B cell (primary cell): ENCODE measurements at regions of chrX and their contacts with region 1.

Region 1: DNA sequence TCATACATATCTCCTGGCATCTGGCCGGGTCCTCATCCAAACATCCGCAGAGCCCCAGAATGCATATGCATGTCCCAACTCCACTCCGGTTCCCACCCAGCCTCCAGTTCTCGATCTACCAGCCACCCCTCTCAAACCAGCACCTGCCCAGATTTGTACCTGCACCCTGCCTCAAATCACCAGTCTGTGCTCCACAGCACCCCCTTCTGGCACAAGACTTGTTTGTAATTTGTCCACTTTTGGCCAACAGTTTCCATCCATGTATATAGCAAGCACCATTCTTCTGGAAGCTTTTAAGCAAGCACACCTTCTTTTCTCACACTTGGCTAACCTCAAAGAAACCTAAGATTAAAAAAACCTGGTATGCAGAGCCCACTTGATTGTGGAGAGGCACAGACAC is 644.1 kb downstream of the MID1IP1 start:
- DNase-seq: peak; percentile 30
- ATAC-seq: no peak
- H3K4me3 ChIP-seq: no peak overlapping the region
- H3K4me3 Mint-ChIP-seq: no peak overlapping the region
- H3K27ac ChIP-seq: no peak overlapping the region
- H3K27ac Mint-ChIP-seq: no peak overlapping the region
- H3K4me1 ChIP-seq: peaks cover 26 to 28% of the 10 kb centered on the region in 2 donors
- H3K4me1 Mint-ChIP-seq: peaks cover 28% of the 10 kb centered on the region
- H3K27me3 ChIP-seq: no peaks in the 10 kb centered on the region
- H3K27me3 Mint-ChIP-seq: no peaks in the 10 kb centered on the region
- CTCF ChIP-seq: no peak

Region 2: DNA sequence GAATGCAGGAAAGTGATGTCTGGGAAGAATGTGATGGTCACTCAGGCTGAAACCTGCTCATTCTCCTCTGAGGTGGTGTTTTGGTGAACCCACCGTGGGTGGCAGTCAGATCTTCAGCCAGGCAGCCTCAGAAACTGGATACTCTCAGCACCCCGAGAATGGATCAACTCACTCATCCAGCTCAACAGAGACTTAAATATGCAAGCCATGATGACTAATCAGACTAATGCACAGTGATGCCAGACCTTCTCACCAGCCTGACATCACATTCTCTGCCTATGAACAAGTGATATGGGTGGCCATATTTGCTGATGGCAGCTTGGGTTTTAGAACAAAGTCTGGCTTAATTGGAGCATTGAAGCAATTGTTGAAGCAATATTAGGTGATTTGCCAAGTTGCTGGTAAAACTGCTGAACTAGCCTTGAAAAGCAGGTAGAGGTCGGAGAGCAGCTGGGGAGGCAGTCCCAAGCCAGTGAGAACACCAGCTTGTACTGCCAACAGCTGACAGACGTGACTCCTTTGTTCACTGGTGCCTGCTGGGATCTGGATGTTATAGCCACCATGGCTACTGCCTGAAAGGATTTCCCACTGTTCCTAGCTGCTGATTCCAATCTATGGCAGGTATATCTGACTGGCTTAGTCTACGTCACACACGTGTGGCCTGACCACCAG is 36.0 kb before region 1 on chrX:
- CTCF ChIA-PET with region 1: no interaction called
- POLR2A ChIA-PET with region 1: no interaction called
- intact Hi-C with region 1: no loop called
- DNase-seq: no peak
- ATAC-seq: no peak
- H3K4me3 ChIP-seq: no peak overlapping the region
- H3K4me3 Mint-ChIP-seq: no peak overlapping the region
- H3K27ac ChIP-seq: no peak overlapping the region
- H3K27ac Mint-ChIP-seq: no peak overlapping the region
- H3K4me1 ChIP-seq: no peaks in the 10 kb centered on the region
- H3K4me1 Mint-ChIP-seq: no peaks in the 10 kb centered on the region
- H3K27me3 ChIP-seq: no peaks in the 10 kb centered on the region
- H3K27me3 Mint-ChIP-seq: peaks cover 14% of the 10 kb centered on the region
- CTCF ChIP-seq: no peak

Region 3: GRCh38 chrX:39497702-39498265 is 52.4 kb after region 1 on chrX:
- CTCF ChIA-PET with region 1: no interaction called
- POLR2A ChIA-PET with region 1: no interaction called
- intact Hi-C with region 1: no loop called
- DNase-seq: no peak
- ATAC-seq: no peak
- H3K4me3 ChIP-seq: no peak overlapping the region
- H3K4me3 Mint-ChIP-seq: no peak overlapping the region
- H3K27ac ChIP-seq: no peak overlapping the region
- H3K27ac Mint-ChIP-seq: no peak overlapping the region
- H3K4me1 ChIP-seq: peaks cover 22 to 24% of the 10 kb centered on the region in 2 donors
- H3K4me1 Mint-ChIP-seq: peaks cover 15% of the 10 kb centered on the region
- H3K27me3 ChIP-seq: no peaks in the 10 kb centered on the region
- H3K27me3 Mint-ChIP-seq: peaks cover 4% of the 10 kb centered on the region
- CTCF ChIP-seq: no peak

Region 4: GRCh38 chrX:39613482-39613921 is 168.2 kb after region 1 on chrX:
- CTCF ChIA-PET with region 1: no interaction called
- POLR2A ChIA-PET with region 1: no interaction called
- intact Hi-C with region 1: loop called (anchors 10 kb)
- DNase-seq: peak; percentile 13
- ATAC-seq: no peak
- H3K4me3 ChIP-seq: peak overlapping the region in 4 of 5 experiments; percentile 17 to 46 (median 42)
- H3K4me3 Mint-ChIP-seq: peak overlapping the region; percentile 78
- H3K27ac ChIP-seq: no peak overlapping the region
- H3K27ac Mint-ChIP-seq: no peak overlapping the region
- H3K4me1 ChIP-seq: peaks cover 9 to 14% of the 10 kb centered on the region in 2 donors
- H3K4me1 Mint-ChIP-seq: peaks cover 26% of the 10 kb centered on the region
- H3K27me3 ChIP-seq: peaks cover 0 to 20% (median 7%) of the 10 kb centered on the region in 4 experiments
- H3K27me3 Mint-ChIP-seq: peaks cover 50% of the 10 kb centered on the region
- CTCF ChIP-seq: no peak